ENCODE measurements at regions of chr19 and their contacts with region 1.

Region 1: GRCh38 chr19:2840794-2841790 is at the start of gene ZNF555:
- DNase-seq: peak; percentile 77 to 99 (median 97)
- ATAC-seq: peak; percentile 98
- H3K4me3 ChIP-seq: peak within 1 kb of the TSS; percentile 94
- H3K4me3 Mint-ChIP-seq: peak within 1 kb of the TSS; percentile 85 to 96 (median 92)
- H3K27ac ChIP-seq: peak within 1 kb of the TSS; percentile 75
- H3K27ac Mint-ChIP-seq: peak within 1 kb of the TSS; percentile 70 to 90 (median 82)
- H3K4me1 ChIP-seq: peaks cover 3 to 13% of the 10 kb centered on the region in 2 donors
- H3K4me1 Mint-ChIP-seq: peaks cover 5 to 33% (median 18%) of the 10 kb centered on the region in 7 donors
- H3K27me3 ChIP-seq: no peaks in the 10 kb centered on the region
- H3K27me3 Mint-ChIP-seq: peaks cover 0 to 7% (median 0%) of the 10 kb centered on the region in 5 donors
- total RNA-seq, gene ZNF555: 1.2 to 10.0 (median 2.7) TPM

Region 2: DNA sequence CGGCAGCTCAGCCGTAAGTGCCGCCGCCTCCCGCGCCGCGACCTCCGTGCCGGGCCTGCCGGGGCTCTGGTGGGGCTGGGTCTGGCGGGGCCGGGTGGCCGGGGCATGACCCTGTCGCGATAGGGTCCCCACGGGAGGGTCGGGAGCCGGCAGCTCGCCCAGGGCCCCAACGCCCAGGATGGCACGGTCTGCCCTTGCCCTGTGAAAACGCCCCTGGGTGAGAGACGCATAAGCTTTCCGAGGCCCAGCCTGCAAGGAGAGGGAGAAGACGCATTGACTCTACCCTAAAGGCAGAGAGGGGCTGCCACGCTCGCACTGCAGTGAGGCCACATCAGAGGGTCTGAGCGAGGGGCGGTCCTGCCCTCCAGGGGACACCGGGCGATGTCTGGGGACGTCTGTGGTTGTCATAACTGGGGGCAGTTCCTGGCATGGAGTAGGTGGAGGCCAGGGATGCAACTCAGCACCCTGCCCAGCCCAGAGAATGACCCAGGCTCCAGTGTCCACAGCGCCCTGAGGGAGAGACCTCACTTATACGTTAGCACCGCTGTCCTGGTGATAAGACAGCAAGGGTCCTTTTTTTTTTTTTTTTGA is 20.9 kb before region 1 on chr19:
- CTCF ChIA-PET with region 1: interaction called, 3 read pairs
- POLR2A ChIA-PET with region 1: interaction called, 5 read pairs
- intact Hi-C with region 1: loop called in 1 of 2 experiments (anchors 1 kb)
- DNase-seq: no peak
- ATAC-seq: no peak
- H3K4me3 ChIP-seq: peak overlapping the region; percentile 79
- H3K4me3 Mint-ChIP-seq: peak overlapping the region; percentile 79 to 90 (median 86)
- H3K27ac ChIP-seq: peak overlapping the region; percentile 76
- H3K27ac Mint-ChIP-seq: peak overlapping the region in 5 of 9 donors; percentile 22 to 80 (median 52)
- H3K4me1 ChIP-seq: peaks cover 3 to 4% of the 10 kb centered on the region in 2 donors
- H3K4me1 Mint-ChIP-seq: peaks cover 3 to 19% (median 6%) of the 10 kb centered on the region in 7 donors
- H3K27me3 ChIP-seq: no peaks in the 10 kb centered on the region
- H3K27me3 Mint-ChIP-seq: no peaks in the 10 kb centered on the region

Region 3: DNA sequence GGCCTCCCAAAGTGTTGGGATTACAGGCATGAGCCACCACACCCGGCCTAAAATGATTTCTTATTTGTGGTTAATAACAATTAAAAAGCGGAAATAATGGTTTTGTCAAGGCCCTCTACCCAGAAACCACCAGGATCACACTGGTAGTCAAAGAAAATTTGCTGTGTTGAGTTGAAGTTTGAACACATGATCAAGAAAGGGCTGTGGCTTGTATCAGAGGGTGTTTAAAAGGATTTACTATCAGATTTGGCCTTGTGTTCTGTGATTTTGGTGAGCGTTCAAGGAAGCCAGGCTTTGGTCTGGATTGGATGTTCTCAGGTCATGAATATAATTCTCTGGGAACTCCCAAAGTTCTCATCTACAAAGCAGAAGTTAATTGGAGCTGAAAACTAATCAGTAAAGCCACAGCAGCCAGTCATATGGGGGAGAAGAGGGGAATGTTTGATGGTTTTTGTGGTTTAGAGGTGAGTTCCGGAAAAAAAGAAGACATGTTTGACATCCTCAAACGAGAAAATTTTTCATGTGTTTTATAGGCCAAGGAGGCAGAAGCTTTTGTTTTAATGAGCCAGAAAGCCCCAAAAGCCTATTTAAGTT is 15.5 kb after region 1 on chr19:
- CTCF ChIA-PET with region 1: interaction called, 4 read pairs
- POLR2A ChIA-PET with region 1: interaction called, 15 read pairs
- intact Hi-C with region 1: loop called in 1 of 2 experiments (anchors 1 kb)
- DNase-seq: peak in 7 of 9 donors; percentile 74 to 85 (median 80)
- ATAC-seq: peak; percentile 91
- H3K4me3 ChIP-seq: no peak overlapping the region
- H3K4me3 Mint-ChIP-seq: peak overlapping the region; percentile 4 to 87 (median 64)
- H3K27ac ChIP-seq: peak overlapping the region; percentile 18
- H3K27ac Mint-ChIP-seq: peak overlapping the region in 8 of 9 donors; percentile 67 to 96 (median 84)
- H3K4me1 ChIP-seq: peaks cover 12 to 32% of the 10 kb centered on the region in 2 donors
- H3K4me1 Mint-ChIP-seq: peaks cover 5 to 55% (median 29%) of the 10 kb centered on the region in 7 donors
- H3K27me3 ChIP-seq: no peaks in the 10 kb centered on the region
- H3K27me3 Mint-ChIP-seq: no peaks in the 10 kb centered on the region

Region 4: GRCh38 chr19:2900296-2901252 is 59.5 kb after region 1 on chr19 and contains the start of gene ZNF57:
- CTCF ChIA-PET with region 1: no interaction called
- POLR2A ChIA-PET with region 1: no interaction called
- intact Hi-C with region 1: loop called in 1 of 2 experiments (anchors 2 kb)
- DNase-seq: peak; percentile 83 to 98 (median 96)
- ATAC-seq: peak; percentile 99
- H3K4me3 ChIP-seq: peak within 1 kb of the TSS; percentile 79
- H3K4me3 Mint-ChIP-seq: peak within 1 kb of the TSS; percentile 88 to 99 (median 96)
- H3K27ac ChIP-seq: peak within 1 kb of the TSS; percentile 63
- H3K27ac Mint-ChIP-seq: peak within 1 kb of the TSS; percentile 55 to 91 (median 85)
- H3K4me1 ChIP-seq: peaks cover 0 to 4% of the 10 kb centered on the region in 2 donors
- H3K4me1 Mint-ChIP-seq: peaks cover 11 to 28% (median 21%) of the 10 kb centered on the region in 7 donors
- H3K27me3 ChIP-seq: no peaks in the 10 kb centered on the region
- H3K27me3 Mint-ChIP-seq: no peaks in the 10 kb centered on the region
- total RNA-seq, gene ZNF57: 1.7 to 5.0 (median 2.2) TPM

Region 5: GRCh38 chr19:2944775-2945574 is 103.9 kb after region 1 on chr19 and contains the start of gene ZNF77:
- CTCF ChIA-PET with region 1: no interaction called
- POLR2A ChIA-PET with region 1: no interaction called
- intact Hi-C with region 1: loop called in 1 of 2 experiments (anchors 1 kb)
- DNase-seq: peak; percentile 93 to 99 (median 99)
- ATAC-seq: peak; percentile 99
- H3K4me3 ChIP-seq: peak within 1 kb of the TSS; percentile 86
- H3K4me3 Mint-ChIP-seq: peak within 1 kb of the TSS; percentile 94 to 99 (median 97)
- H3K27ac ChIP-seq: peak within 1 kb of the TSS; percentile 87
- H3K27ac Mint-ChIP-seq: peak within 1 kb of the TSS; percentile 90 to 99 (median 98)
- H3K4me1 ChIP-seq: peaks cover 11 to 15% of the 10 kb centered on the region in 2 donors
- H3K4me1 Mint-ChIP-seq: peaks cover 15 to 43% (median 34%) of the 10 kb centered on the region in 7 donors
- H3K27me3 ChIP-seq: no peaks in the 10 kb centered on the region
- H3K27me3 Mint-ChIP-seq: no peaks in the 10 kb centered on the region
- total RNA-seq, gene ZNF77: 2.0 to 5.8 (median 4.3) TPM

Region 6: DNA sequence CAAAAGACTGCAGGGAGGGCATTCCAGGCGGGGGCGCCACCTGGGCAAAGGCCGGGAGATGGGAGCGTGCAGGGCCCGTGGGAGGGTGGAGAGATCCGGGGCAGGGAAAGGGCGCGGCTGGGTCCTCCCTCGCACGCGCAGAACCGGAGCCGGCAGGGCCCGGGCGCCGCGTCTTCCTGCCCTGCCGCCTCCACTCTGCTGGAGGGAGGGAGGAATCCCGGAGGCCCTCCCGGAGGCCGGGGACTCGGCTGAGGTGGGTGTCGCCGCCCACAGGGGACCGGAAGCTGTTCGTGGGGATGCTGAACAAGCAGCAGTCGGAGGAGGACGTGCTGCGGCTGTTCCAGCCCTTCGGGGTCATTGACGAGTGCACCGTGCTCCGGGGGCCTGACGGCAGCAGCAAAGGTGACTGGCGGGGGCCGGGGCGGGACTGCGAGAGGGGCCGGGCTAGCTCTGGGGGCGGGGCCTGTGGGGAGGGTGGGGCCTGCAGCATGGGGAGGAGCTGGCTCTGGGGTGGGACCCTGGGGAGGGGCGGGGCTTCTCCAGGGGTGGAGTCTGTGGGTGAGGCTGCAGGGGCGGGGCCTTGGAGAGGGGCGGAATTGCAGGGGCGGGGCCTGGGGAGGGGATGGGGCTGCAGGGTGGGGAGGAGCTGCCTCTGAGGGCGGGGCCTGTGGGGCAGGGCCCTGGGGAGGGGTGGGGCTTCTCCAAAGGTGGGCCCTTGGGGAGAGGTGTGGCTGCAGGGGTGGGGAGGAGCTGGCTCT is 434.7 kb after region 1 on chr19:
- CTCF ChIA-PET with region 1: no interaction called
- POLR2A ChIA-PET with region 1: no interaction called
- intact Hi-C with region 1: loop called in 1 of 2 experiments (anchors 1 kb)
- DNase-seq: peak; percentile 78 to 96 (median 91)
- ATAC-seq: peak; percentile 89
- H3K4me3 ChIP-seq: peak overlapping the region; percentile 74
- H3K4me3 Mint-ChIP-seq: peak overlapping the region; percentile 82 to 92 (median 86)
- H3K27ac ChIP-seq: peak overlapping the region; percentile 62
- H3K27ac Mint-ChIP-seq: peak overlapping the region in 8 of 9 donors; percentile 32 to 89 (median 84)
- H3K4me1 ChIP-seq: peaks cover 8 to 16% of the 10 kb centered on the region in 2 donors
- H3K4me1 Mint-ChIP-seq: peaks cover 8 to 22% (median 14%) of the 10 kb centered on the region in 7 donors
- H3K27me3 ChIP-seq: no peaks in the 10 kb centered on the region
- H3K27me3 Mint-ChIP-seq: peaks cover 7 to 16% (median 12%) of the 10 kb centered on the region in 5 donors

Region 7: DNA sequence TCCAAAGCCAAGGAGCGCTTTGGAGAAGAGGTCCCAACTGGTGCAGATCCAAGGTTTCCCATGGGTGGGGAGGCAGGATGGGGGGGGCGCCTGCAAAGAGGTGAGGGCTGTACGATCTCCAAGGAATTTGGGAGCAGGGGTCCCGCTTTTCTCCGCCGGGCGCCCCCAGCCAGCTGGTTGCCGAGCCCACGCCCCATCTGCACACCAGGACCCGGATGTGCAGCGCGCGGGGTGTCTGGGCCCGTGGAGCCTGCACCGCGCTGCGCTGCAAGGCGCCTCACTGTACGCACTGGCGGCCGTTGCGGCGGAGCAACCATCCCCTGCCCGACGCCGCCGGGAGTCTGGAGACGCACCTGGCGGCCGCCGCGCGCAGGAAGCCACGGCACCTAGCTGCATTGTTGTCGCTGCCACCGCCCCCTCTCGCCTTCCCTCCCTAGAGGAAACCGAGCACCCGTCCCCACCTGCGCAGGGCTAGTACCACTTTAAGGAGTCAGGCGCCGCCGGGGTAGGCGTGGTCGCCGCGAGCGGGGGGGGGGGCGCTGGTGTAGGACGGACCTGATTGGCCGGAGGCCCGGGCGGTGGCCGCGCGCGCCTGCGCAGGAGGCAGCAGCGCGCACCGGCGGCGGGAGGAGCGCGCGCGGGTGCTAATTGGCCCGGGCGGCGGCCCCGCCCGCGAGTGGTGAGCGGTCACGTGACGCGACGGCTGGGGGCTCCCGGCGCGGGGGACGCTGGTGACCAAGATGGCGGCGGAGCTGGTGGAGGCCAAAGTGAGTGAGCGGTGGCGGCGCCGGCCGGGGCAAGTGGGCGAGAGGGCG is 1166.1 kb after region 1 on chr19 and contains the start of gene PIAS4:
- CTCF ChIA-PET with region 1: no interaction called
- POLR2A ChIA-PET with region 1: no interaction called
- intact Hi-C with region 1: no loop called
- DNase-seq: peak; percentile 93 to 97 (median 96)
- ATAC-seq: peak; percentile 95
- H3K4me3 ChIP-seq: peak within 1 kb of the TSS; percentile 76
- H3K4me3 Mint-ChIP-seq: peak within 1 kb of the TSS; percentile 82 to 93 (median 88)
- H3K27ac ChIP-seq: peak within 1 kb of the TSS; percentile 75
- H3K27ac Mint-ChIP-seq: peak within 1 kb of the TSS; percentile 31 to 93 (median 85)
- H3K4me1 ChIP-seq: peaks cover 26 to 27% of the 10 kb centered on the region in 2 donors
- H3K4me1 Mint-ChIP-seq: peaks cover 13 to 33% (median 23%) of the 10 kb centered on the region in 7 donors
- H3K27me3 ChIP-seq: no peaks in the 10 kb centered on the region
- H3K27me3 Mint-ChIP-seq: no peaks in the 10 kb centered on the region
- total RNA-seq, gene PIAS4: 23.9 to 40.6 (median 28.8) TPM

Measured in naive thymus-derived CD4-positive, alpha-beta T cell (primary cell).